ENCODE measurements at regions of chr1 and their contacts with region 1.

Region 1: GRCh38 chr1:156689035-156689952 is 12.1 kb upstream of the NES start:
- DNase-seq: peak; percentile 71 to 95
- H3K4me3 ChIP-seq: no peak overlapping the region
- CTCF ChIP-seq: peak in 1 of 3 donors; percentile 75
- POLR2A ChIP-seq: no peak

Region 2: GRCh38 chr1:156725683-156726280 is 36.5 kb after region 1 on chr1:
- intact Hi-C with region 1: loop called (anchors 1 kb)
- DNase-seq: peak; percentile 86 to 97
- H3K4me3 ChIP-seq: no peak overlapping the region
- CTCF ChIP-seq: peak in 1 of 3 donors; percentile 86
- POLR2A ChIP-seq: no peak